ENCODE measurements at regions of chr2 and their contacts with region 1.

Region 1: DNA sequence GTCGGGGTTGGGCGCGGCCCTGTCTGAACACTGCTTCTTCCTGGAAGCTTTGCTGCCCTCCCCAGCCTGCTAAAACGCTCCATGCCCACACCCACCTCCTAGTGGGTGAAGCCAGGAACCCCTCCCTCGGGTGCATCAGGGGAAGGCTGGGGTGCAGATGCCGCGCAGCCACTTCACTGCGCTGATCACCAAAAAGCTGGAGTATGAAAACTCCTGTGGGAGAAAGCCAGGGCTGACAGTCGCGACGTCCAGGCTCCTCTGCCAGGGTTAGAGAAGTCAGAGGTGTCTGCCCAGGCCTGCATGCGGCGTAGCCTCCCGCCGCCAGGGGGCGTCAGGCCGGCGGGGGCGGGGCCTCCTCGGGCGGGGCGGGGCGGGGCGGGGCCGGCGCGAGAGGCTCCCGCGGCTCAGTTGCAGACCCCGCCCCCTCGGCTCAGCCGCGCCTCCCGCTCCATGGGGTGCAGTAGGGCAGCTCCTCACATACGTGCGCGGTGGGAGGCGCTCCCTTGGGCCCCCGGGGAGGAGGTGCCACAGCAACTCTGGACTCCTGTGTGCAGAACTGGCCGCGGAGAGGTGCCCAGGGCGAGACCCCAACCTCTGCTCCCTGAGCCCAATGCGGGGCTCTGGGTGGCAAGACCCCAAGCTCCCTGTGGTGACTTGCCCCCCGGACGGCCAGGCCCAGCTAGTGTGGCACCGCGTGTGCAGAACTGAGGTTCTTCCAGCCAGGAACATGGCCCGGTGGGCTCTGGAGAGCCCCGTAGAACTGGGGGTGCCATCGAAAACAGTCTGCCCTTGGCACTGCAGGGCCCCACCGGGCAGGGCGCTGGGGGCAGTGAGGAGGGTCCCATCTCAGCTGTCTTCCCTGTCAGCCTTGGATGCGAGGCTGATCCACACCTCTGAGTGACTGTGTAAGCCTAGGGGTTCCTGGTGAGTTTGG is 1.8 kb upstream of the RNPEPL1 start:
- DNase-seq: peak; percentile 93
- H3K4me3 Mint-ChIP-seq: peak overlapping the region; percentile 94
- H3K27ac Mint-ChIP-seq: peak overlapping the region; percentile 97
- H3K4me1 Mint-ChIP-seq: peaks cover 61% of the 10 kb centered on the region
- H3K27me3 Mint-ChIP-seq: no peaks in the 10 kb centered on the region

Region 2: GRCh38 chr2:240586198-240586918 is 19.9 kb after region 1 on chr2 and contains the start of gene CAPN10:
- intact Hi-C with region 1: loop called (anchors 1 kb)
- DNase-seq: peak; percentile 97
- H3K4me3 Mint-ChIP-seq: peak within 1 kb of the TSS; percentile 97
- H3K27ac Mint-ChIP-seq: peak within 1 kb of the TSS; percentile 91
- H3K4me1 Mint-ChIP-seq: peaks cover 27% of the 10 kb centered on the region
- H3K27me3 Mint-ChIP-seq: no peaks in the 10 kb centered on the region
- total RNA-seq, gene CAPN10: 49.6 and 51.1 TPM in 2 replicates

Region 3: GRCh38 chr2:240832205-240832727 is 265.8 kb after region 1 on chr2:
- intact Hi-C with region 1: loop called (anchors 1 kb)
- DNase-seq: peak; percentile 97
- H3K4me3 Mint-ChIP-seq: no peak overlapping the region
- H3K27ac Mint-ChIP-seq: no peak overlapping the region
- H3K4me1 Mint-ChIP-seq: peaks cover 2% of the 10 kb centered on the region
- H3K27me3 Mint-ChIP-seq: peaks cover 16% of the 10 kb centered on the region

Measured in activated T-helper 2 cell treated with anti-CD3 and anti-CD28 coated beads, Interferon-gamma antibody, Interleukin-2, Interleukin-4, amounts not matched to agents 10 μg/mL and 5 μg/mL and 100 μg/mL, durations not matched to agents 14 hours and 24 hours and 36 hours (primary cell).